Activated CD8-positive, alpha-beta T cell treated with anti-CD3 and anti-CD28 coated beads, Interleukin-2, amount 10 ng/mL, durations not matched to agents 7 days and 5 days (primary cell): ENCODE measurements at regions of chr2 and their contacts with region 1.

Region 1: GRCh38 chr2:147989809-147990403 is 30.6 kb downstream of the ORC4 start:
- DNase-seq: peak; percentile 43
- ATAC-seq: no peak
- H3K4me3 Mint-ChIP-seq: no peak overlapping the region
- H3K27ac Mint-ChIP-seq: no peak overlapping the region
- H3K4me1 Mint-ChIP-seq: peaks cover 10% of the 10 kb centered on the region
- H3K27me3 Mint-ChIP-seq: no peaks in the 10 kb centered on the region

Region 2: DNA sequence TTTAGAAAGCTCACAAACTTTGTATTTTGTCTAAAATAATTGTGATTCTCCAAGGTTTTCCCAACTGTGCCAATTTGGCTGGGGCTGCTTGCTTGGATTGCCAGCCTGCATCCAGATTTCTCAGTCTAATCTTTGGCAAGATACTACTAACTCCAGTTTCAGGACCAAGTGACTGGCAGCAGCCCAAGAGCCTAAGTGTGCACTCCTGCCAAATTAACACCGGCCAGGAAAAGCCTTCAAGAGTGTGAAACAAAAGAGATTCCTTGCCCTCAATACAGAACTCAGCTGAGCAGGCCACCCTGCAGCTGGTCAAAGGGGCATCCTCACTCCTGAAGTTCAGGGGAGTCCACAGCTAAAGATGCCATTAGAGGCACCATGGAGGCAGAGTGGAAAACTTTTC is 734.1 kb before region 1 on chr2:
- CTCF ChIA-PET with region 1: no interaction called
- POLR2A ChIA-PET with region 1: no interaction called
- DNase-seq: no peak
- ATAC-seq: no peak
- H3K4me3 Mint-ChIP-seq: no peak overlapping the region
- H3K27ac Mint-ChIP-seq: no peak overlapping the region
- H3K4me1 Mint-ChIP-seq: no peaks in the 10 kb centered on the region
- H3K27me3 Mint-ChIP-seq: no peaks in the 10 kb centered on the region

Region 3: GRCh38 chr2:147715807-147716206 is 274.1 kb before region 1 on chr2:
- CTCF ChIA-PET with region 1: no interaction called
- POLR2A ChIA-PET with region 1: no interaction called
- DNase-seq: no peak
- ATAC-seq: no peak
- H3K4me3 Mint-ChIP-seq: no peak overlapping the region
- H3K27ac Mint-ChIP-seq: no peak overlapping the region
- H3K4me1 Mint-ChIP-seq: no peaks in the 10 kb centered on the region
- H3K27me3 Mint-ChIP-seq: peaks cover 7% of the 10 kb centered on the region

Region 4: DNA sequence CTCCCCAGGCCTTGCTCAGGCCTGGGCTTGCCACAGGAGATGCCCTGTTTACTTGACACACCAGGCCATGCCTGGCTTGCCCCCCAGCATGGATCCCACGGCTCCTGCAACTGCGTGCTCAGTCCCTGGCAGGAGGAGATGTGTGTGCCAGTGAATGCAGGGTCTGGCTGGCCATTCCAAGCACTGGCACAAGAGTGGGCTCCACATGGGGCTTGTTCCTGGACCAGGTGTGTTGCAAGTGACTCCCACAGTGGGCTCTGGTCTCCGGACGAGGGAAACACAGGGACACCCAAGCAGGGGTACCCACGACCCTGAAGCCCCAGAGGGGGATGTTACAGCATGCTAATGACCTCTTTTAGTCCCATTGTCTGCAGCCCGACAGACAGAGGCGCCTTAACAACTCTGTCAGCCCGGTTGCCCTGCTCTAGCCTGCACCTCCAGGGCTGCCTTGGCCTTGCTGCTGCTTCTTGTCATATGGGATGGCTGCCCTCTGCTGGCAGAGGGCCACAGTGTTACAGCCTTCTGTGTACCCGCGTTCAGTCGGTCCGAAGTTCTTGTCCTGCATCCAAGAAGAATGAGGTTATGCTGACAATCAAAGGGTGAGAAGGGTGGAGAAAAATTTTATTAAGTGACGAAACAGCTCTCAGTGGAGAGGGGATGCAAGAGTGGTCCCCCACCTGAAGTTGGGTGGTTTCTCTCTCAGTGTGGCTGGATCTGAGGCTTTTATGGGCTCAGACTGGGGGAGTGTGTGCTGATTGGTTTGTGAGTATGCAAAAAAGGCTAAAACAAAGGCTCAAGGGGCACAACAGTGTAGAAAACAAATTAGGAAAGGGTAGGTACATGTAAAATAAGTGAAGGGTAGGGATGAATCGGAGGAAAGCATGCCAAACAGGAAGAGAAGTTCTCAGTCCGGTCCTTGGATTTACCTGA is 211.4 kb after region 1 on chr2:
- CTCF ChIA-PET with region 1: interaction called, 21 read pairs
- POLR2A ChIA-PET with region 1: no interaction called
- DNase-seq: peak; percentile 58
- ATAC-seq: peak; percentile 83
- H3K4me3 Mint-ChIP-seq: no peak overlapping the region
- H3K27ac Mint-ChIP-seq: no peak overlapping the region
- H3K4me1 Mint-ChIP-seq: no peaks in the 10 kb centered on the region
- H3K27me3 Mint-ChIP-seq: no peaks in the 10 kb centered on the region

Region 5: GRCh38 chr2:148317598-148317997 is 327.7 kb after region 1 on chr2:
- CTCF ChIA-PET with region 1: no interaction called
- POLR2A ChIA-PET with region 1: no interaction called
- DNase-seq: no peak
- ATAC-seq: no peak
- H3K4me3 Mint-ChIP-seq: no peak overlapping the region
- H3K27ac Mint-ChIP-seq: no peak overlapping the region
- H3K4me1 Mint-ChIP-seq: no peaks in the 10 kb centered on the region
- H3K27me3 Mint-ChIP-seq: no peaks in the 10 kb centered on the region